Activated T-helper 1 cell treated with anti-CD3 and anti-CD28 coated beads, Interleukin-12 subunit alpha, Interleukin-12 subunit beta, Interleukin-2, Interleukin-4 antibody, amounts not matched to agents 30 ng/mL and 10 ng/mL and 1 ng/mL, durations not matched to agents 14 hours and 24 hours and 36 hours (primary cell): ENCODE measurements at regions of chr1 and their contacts with region 1.

Region 1: DNA sequence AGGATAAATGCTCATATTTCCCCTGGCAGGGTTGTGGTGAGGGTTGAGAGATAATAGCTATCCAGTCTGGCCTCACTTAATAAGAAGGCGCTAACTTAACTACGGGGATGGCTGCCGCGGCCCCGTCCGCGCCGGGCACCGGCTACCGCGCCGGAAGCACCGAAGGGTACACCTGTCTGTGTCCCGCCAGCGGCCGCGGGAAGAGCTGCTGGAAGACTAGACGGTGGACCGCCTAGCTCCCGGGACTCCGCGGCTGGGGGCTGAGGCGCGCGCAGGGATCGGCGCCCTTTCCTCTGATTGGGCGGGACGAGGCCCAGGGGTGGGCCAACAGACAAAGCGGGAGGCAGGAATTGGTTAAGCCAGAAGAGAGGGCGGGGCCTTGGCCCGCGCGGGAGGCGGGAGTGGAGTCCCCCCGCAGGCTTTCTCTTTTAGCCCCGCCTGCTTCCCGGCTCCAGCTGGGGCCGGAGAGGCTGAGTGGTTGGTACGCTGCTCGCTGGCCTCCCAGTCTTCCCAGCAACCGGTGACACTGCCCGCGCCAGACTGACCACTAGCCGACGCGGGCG is at the start of gene ZNF672:
- DNase-seq: peak; percentile 95
- H3K4me3 Mint-ChIP-seq: no peak within 1 kb of the TSS
- H3K27ac Mint-ChIP-seq: peak within 1 kb of the TSS; percentile 93
- H3K4me1 Mint-ChIP-seq: peaks cover 15% of the 10 kb centered on the region
- H3K27me3 Mint-ChIP-seq: peaks cover 2% of the 10 kb centered on the region
- total RNA-seq, gene ZNF672: 42.3 and 45.2 TPM in 2 replicates

Region 2: DNA sequence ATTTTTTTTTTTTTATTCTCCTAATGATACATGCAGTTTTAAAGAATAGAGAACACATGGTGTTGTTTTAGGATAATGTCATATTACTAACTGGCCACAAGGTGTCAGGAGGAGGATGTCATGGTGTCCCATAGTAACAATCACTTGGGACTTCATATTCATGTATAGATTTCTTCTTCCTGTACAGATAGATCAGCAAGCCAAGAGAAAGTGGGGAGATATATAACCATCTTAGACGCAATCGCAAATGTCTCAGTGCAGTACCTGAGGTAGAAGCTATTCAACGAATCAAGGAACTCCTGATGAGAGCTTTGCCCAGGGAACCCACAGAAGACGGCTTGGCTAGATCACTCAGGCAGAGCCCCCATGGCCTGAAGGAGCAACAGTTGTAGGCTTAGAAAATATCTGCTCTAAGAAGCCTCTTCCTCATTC is 215.3 kb before region 1 on chr1:
- intact Hi-C with region 1: no loop called
- DNase-seq: no peak
- H3K4me3 Mint-ChIP-seq: no peak overlapping the region
- H3K27ac Mint-ChIP-seq: no peak overlapping the region
- H3K4me1 Mint-ChIP-seq: peaks cover 9% of the 10 kb centered on the region
- H3K27me3 Mint-ChIP-seq: no peaks in the 10 kb centered on the region

Region 3: GRCh38 chr1:248825909-248826760 is 11.7 kb before region 1 on chr1 and contains the start of gene SH3BP5L:
- intact Hi-C with region 1: loop called (anchors 1 kb)
- DNase-seq: peak; percentile 84
- H3K4me3 Mint-ChIP-seq: peak within 1 kb of the TSS; percentile 91
- H3K27ac Mint-ChIP-seq: peak within 1 kb of the TSS; percentile 100
- H3K4me1 Mint-ChIP-seq: peaks cover 44% of the 10 kb centered on the region
- H3K27me3 Mint-ChIP-seq: peaks cover 2% of the 10 kb centered on the region
- total RNA-seq, gene SH3BP5L: 29.0 and 30.9 TPM in 2 replicates

Region 4: GRCh38 chr1:248858891-248859889 is 21.3 kb after region 1 on chr1 and contains the start of gene ZNF692:
- intact Hi-C with region 1: loop called (anchors 1 kb)
- DNase-seq: peak; percentile 97
- H3K4me3 Mint-ChIP-seq: peak within 1 kb of the TSS; percentile 96
- H3K27ac Mint-ChIP-seq: peak within 1 kb of the TSS; percentile 97
- H3K4me1 Mint-ChIP-seq: peaks cover 37% of the 10 kb centered on the region
- H3K27me3 Mint-ChIP-seq: no peaks in the 10 kb centered on the region
- total RNA-seq, gene ZNF692: 89.6 and 91.0 TPM in 2 replicates

Region 5: GRCh38 chr1:248873409-248873992 is 35.6 kb after region 1 on chr1:
- intact Hi-C with region 1: loop called (anchors 1 kb)
- DNase-seq: peak; percentile 87
- H3K4me3 Mint-ChIP-seq: peak overlapping the region; percentile 87
- H3K27ac Mint-ChIP-seq: peak overlapping the region; percentile 95
- H3K4me1 Mint-ChIP-seq: peaks cover 26% of the 10 kb centered on the region
- H3K27me3 Mint-ChIP-seq: peaks cover 16% of the 10 kb centered on the region

Region 6: DNA sequence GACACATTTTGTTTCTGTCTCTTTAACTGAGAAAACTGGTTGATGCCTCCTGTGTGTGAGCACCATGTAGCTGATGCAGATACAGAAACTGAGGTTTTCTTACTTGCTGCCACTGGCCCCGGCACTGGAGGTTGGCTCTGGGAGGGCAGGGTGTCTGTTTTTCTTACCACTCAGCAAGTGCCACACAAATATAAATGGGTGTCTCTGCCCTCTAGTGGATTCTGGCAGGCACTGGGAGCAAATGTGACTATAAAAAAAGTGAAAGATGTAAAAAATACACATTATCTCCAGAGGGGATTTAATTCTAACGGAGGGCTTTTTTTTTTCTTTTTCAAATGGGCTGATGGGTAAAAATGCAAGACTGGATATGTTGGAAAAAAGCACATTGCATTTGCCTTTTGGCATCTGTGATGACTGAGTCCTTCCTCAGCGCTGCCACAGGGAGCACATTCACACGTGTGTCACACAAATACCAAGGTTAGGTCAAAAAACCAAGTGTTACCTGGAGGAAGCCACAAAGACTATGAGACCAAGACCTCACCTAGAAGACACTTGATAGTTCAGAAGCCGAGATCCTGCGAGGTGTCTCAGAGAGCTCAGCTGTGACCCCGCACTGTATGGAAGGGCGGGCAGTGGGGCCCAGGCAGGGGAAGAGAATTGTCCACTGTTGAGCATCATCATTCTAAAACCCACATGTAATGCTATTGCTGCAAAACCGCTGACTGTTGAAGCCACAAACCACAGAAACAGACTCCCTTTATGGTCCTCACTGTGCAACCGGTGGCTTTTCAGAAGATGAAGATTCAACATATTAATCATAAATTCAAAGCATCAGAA is 87.0 kb after region 1 on chr1:
- intact Hi-C with region 1: loop called (anchors 1 kb)
- DNase-seq: peak; percentile 34
- H3K4me3 Mint-ChIP-seq: peak overlapping the region; percentile 9
- H3K27ac Mint-ChIP-seq: peak overlapping the region; percentile 31
- H3K4me1 Mint-ChIP-seq: peaks cover 38% of the 10 kb centered on the region
- H3K27me3 Mint-ChIP-seq: peaks cover 10% of the 10 kb centered on the region